ENCODE measurements at regions of chr18 and their contacts with region 1.

Region 1: DNA sequence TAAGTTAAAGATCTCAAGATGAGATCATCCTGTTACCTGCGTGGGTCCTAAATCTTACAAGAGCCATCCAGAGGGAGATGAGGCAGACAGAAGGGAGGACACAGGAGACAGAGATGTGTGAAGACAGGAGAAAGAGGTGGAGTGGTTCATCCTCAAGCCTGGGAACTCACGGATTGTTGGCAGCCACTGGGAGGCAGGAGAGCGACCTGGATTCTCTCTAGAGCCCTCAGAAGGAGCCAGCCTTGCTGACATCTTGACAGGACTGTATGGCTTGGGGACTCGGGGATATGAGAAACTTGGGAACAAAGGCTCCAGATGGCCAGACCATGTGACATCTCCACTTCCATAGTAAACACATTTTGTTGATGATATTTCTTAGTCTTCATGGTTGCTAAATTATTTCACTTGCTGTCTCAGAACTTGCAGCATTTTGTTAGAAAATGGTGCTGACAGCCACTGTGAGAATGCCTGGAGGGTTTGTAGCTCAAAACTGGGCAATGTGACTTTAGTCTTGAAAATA is 57.8 kb upstream of the MC2R start:
- DNase-seq: no peak
- H3K4me3 ChIP-seq: no peak overlapping the region
- H3K27ac ChIP-seq: no peak overlapping the region
- H3K4me1 ChIP-seq: no peaks in the 10 kb centered on the region
- H3K27me3 ChIP-seq: no peaks in the 10 kb centered on the region
- CTCF ChIP-seq: no peak

Region 2: DNA sequence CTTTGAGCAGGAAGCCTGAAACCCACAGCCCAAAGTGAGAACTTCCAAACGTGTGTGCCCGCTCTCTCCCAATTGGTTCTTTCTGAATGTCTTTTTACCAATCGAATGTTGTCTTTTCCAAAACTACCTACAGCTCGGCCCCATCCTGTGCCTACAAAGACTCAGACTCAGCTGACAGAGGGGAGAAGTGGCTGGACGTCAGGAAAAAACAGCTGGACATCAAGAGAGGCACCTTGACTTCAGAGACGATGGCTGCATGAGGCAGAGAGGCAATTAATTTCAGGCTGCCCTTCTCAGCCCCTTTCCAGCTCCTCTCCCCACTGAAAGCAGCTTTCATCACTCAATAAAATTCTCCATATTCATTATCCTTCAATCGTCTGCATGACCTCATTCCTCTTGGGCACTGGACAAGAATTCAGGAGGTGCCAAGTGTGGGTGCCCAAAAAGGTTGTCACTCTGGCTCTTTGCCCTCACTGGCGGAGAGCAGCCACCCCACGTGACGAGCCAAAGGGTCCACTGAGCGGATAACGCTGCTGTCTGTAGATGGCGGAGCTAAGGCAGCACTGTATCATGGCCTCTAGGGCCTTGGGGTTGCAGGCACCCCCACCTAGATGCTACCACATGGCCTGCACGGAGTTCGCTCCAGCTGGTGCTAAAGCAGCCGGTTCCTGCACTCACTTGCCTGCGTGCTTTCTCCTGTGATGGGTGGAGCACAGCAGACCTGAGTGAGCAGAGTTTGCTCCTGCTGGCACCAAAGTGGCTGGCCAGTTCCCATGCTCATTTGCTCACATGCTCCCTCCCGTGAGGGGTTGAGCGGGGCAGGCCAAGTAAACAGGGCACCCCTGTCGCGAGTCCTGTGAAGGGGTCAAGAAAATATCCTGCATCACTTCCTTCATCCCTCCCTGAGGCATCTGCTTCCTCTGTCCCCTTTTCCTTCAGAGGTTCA is 284.7 kb before region 1 on chr18:
- intact Hi-C with region 1: no loop called
- DNase-seq: no peak
- H3K4me3 ChIP-seq: no peak overlapping the region
- H3K27ac ChIP-seq: no peak overlapping the region
- H3K4me1 ChIP-seq: no peaks in the 10 kb centered on the region
- H3K27me3 ChIP-seq: no peaks in the 10 kb centered on the region
- CTCF ChIP-seq: no peak

Region 3: DNA sequence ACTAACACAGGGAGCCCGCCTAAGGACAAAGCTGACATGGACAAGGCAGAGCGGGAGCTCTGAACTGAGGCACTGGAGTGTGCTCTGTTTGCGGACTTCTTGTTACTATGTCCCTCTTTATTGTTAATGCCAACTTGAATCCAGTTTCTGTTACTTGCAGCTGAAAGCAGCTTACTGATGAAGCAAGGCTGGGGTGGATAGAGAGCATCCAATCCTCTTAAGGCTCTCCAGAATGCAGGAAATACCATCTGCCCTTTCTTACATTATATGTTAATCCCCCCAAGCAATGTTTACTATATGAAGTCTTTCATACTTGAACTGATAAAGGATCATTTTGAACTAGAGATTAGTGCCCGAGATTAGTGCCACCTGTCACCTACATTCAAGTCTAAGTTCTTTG is 256.2 kb before region 1 on chr18:
- intact Hi-C with region 1: no loop called
- DNase-seq: no peak
- H3K4me3 ChIP-seq: no peak overlapping the region
- H3K27ac ChIP-seq: no peak overlapping the region
- H3K4me1 ChIP-seq: no peaks in the 10 kb centered on the region
- H3K27me3 ChIP-seq: no peaks in the 10 kb centered on the region
- CTCF ChIP-seq: no peak

Region 4: DNA sequence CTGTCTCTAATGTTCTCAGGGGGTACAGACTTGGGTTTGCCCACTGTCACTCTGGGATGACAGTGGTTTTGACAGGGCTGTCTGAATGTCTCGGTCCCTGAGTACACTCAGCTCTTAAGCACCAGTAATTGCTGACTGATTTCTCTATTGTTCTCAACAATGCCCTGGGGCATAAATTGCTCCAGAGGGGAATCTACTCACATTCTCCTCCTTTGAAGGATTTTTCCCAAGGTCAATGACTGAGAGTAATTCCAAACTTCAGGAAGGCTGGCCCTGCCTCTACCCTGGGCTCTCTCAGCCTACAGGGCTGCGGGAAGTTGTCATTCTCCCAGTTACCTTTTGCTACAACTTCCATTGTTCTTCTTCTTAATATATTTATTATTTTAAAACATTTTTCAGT is 94.3 kb before region 1 on chr18:
- intact Hi-C with region 1: no loop called
- DNase-seq: no peak
- H3K4me3 ChIP-seq: no peak overlapping the region
- H3K27ac ChIP-seq: no peak overlapping the region
- H3K4me1 ChIP-seq: no peaks in the 10 kb centered on the region
- H3K27me3 ChIP-seq: no peaks in the 10 kb centered on the region
- CTCF ChIP-seq: no peak

Region 5: DNA sequence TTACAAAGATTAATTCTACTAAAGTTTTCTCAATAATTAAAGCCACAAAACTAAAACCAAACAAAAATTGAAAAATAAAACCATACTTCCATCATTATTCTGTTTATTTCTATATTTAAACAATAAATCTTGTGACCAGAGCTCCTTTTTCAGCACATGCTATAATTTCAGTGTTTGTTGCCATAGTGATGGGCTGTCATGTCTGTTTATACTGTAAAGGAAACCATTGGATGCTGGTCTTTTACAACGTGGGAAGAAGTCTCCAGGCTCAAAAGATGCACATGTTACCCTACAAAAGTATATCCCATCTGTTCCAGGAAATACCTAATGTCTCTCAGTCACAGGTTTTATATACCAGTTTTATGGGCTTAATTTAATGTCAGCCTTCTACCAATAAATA is 42.3 kb after region 1 on chr18:
- intact Hi-C with region 1: loop called (anchors 10 kb)
- DNase-seq: no peak
- H3K4me3 ChIP-seq: no peak overlapping the region
- H3K27ac ChIP-seq: no peak overlapping the region
- H3K4me1 ChIP-seq: no peaks in the 10 kb centered on the region
- H3K27me3 ChIP-seq: no peaks in the 10 kb centered on the region
- CTCF ChIP-seq: no peak

Region 6: GRCh38 chr18:14144628-14144895 is 171.4 kb after region 1 on chr18:
- intact Hi-C with region 1: no loop called
- DNase-seq: no peak
- H3K4me3 ChIP-seq: no peak overlapping the region
- H3K27ac ChIP-seq: no peak overlapping the region
- H3K4me1 ChIP-seq: no peaks in the 10 kb centered on the region
- H3K27me3 ChIP-seq: no peaks in the 10 kb centered on the region
- CTCF ChIP-seq: no peak

Measured in colonic mucosa (tissue), 4 donors.